Caco-2 (cell line): ENCODE measurements at regions of chr10 and their contacts with region 1.

Region 1: DNA sequence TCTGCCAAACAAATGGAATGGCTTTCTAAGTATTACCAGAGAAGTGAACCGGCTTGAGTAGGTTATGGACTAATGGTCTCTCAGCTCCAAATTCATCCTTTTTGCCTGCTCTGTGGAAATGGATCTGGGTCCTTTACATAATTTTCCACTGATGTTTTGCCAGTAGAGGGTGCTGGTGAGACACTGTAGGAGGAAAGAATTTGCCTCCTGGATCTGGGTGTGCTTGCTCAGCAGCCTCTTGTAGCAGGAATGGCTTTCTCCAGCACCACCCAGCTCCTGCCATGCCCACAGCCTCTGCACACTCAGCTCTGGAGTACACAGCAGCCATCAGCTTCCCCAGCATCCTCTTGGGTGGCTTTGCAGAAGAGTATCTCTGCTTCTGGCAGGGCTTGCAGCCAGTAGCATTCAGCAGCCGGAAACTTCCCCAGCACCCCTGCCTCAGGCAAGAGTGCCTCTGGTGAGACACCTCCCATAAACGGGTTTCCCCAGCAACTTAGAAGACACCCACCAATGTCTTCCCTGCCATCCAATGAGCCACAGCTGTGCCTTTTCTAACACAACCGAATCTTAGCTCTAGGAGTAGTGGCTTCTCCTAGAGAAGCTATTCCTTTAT is 235.0 kb upstream of the PLPP4 start:
- DNase-seq: peak; percentile 62 to 75
- H3K4me3 ChIP-seq: no peak overlapping the region
- H3K4me3 Mint-ChIP-seq: no peak overlapping the region
- H3K27ac Mint-ChIP-seq: no peak overlapping the region
- H3K4me1 ChIP-seq: no peaks in the 10 kb centered on the region
- H3K4me1 Mint-ChIP-seq: no peaks in the 10 kb centered on the region
- H3K27me3 ChIP-seq: no peaks in the 10 kb centered on the region; the same call in 1 of the 2 replicates
- H3K27me3 Mint-ChIP-seq: peaks cover 17% of the 10 kb centered on the region
- CTCF ChIP-seq: peak; percentile 78 to 85

Region 2: DNA sequence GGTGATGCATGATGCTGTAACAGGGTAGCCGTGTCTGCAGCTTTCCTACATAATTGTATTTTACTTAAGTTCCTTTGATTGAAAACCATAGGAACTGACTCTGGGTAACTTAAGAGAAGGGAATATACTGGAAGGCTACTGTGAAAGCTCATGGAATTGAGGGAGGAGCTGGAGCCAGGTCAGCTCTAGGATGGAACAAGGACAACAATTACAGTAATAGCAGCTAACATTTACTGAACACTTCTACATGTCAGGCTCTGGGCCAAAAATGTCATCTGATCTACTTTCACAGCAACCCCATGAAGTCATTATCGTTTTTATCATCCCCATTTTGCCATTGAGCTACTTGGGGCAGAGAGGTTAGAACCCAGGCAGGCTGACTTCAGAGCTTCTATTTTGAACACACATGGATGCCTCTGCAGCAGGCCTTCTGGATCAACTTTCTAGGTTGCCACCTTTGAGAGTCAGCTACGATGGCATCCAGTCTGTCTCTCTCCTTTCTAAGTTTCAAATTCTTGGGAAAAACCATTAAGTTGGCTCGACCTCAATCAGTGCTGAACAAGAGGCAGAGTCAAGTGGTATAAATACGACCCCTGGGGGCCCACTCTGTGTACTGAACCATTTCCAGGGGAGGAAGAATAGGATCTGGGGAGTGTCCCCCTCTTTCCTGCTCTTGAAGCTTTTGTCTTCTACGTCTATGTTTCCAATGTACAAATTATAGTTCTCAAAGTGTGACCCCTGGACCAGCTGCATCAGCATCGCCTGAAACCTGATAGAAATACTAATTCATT is 37.2 kb before region 1 on chr10:
- CTCF ChIA-PET with region 1: no interaction called
- POLR2A ChIA-PET with region 1: no interaction called
- intact Hi-C with region 1: no loop called
- DNase-seq: no peak
- H3K4me3 ChIP-seq: no peak overlapping the region
- H3K4me3 Mint-ChIP-seq: no peak overlapping the region
- H3K27ac Mint-ChIP-seq: no peak overlapping the region
- H3K4me1 ChIP-seq: no peaks in the 10 kb centered on the region
- H3K4me1 Mint-ChIP-seq: no peaks in the 10 kb centered on the region
- H3K27me3 ChIP-seq: no peaks in the 10 kb centered on the region
- H3K27me3 Mint-ChIP-seq: peaks cover 7% of the 10 kb centered on the region
- CTCF ChIP-seq: no peak

Region 3: DNA sequence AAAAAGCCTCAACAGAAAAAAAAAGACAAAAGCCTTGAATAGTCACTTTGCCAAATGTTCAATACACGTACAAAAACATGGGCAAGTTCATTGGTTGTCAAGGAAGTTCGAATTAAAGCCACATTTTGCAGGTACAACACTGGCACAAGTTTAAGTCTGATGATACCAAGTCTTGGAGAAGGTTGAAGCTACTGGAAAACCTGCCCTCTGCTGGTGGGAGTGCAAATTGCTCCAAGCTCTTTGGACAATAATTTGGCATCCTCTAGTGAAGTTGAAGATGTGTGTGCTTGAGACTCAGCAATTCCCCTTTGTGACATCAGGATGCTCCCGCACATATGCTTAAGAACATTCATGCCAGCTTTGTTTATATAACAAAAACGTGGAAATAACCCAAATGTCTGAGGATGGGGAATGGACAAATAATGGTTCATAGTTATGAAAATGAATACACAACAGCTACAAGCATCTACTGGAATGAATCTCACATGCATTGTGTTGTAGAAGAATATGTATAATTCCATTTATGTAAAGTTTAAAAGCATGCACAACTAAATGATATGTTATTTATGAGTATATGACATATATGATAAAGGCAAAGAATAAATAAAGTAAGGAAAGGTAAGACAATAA is 115.0 kb after region 1 on chr10:
- CTCF ChIA-PET with region 1: interaction called, 32 read pairs
- POLR2A ChIA-PET with region 1: no interaction called
- intact Hi-C with region 1: no loop called
- DNase-seq: peak; percentile 49 to 66
- H3K4me3 ChIP-seq: no peak overlapping the region
- H3K4me3 Mint-ChIP-seq: no peak overlapping the region
- H3K27ac Mint-ChIP-seq: no peak overlapping the region
- H3K4me1 ChIP-seq: no peaks in the 10 kb centered on the region
- H3K4me1 Mint-ChIP-seq: no peaks in the 10 kb centered on the region
- H3K27me3 ChIP-seq: no peaks in the 10 kb centered on the region; the same call in 1 of the 2 replicates
- H3K27me3 Mint-ChIP-seq: peaks cover 21% of the 10 kb centered on the region
- CTCF ChIP-seq: peak; percentile 83